Heart right ventricle (tissue), 16 donors: ENCODE measurements at regions of chr13 and their contacts with region 1.

Region 1: GRCh38 chr13:41678249-41678648 is 220.9 kb downstream of the RGCC start:
- DNase-seq: no peak
- ATAC-seq: peak in 5 of 8 donors; percentile 51 to 74 (median 58)
- H3K4me3 ChIP-seq: no peak overlapping the region
- H3K27ac ChIP-seq: peak overlapping the region in 5 of 10 donors; percentile 10 to 59 (median 27)
- H3K4me1 ChIP-seq: peaks cover 0 to 26% (median 7%) of the 10 kb centered on the region in 9 donors
- H3K27me3 ChIP-seq: no peaks in the 10 kb centered on the region
- CTCF ChIP-seq: no peak

Region 2: GRCh38 chr13:41546372-41547190 is 131.7 kb before region 1 on chr13:
- intact Hi-C with region 1: no loop called
- DNase-seq: no peak
- ATAC-seq: peak in 1 of 8 donors; percentile 0
- H3K4me3 ChIP-seq: no peak overlapping the region
- H3K27ac ChIP-seq: peak overlapping the region in 9 of 10 donors; percentile 68 to 85 (median 76)
- H3K4me1 ChIP-seq: peaks cover 0 to 32% (median 18%) of the 10 kb centered on the region in 9 donors
- H3K27me3 ChIP-seq: no peaks in the 10 kb centered on the region
- CTCF ChIP-seq: no peak

Region 3: DNA sequence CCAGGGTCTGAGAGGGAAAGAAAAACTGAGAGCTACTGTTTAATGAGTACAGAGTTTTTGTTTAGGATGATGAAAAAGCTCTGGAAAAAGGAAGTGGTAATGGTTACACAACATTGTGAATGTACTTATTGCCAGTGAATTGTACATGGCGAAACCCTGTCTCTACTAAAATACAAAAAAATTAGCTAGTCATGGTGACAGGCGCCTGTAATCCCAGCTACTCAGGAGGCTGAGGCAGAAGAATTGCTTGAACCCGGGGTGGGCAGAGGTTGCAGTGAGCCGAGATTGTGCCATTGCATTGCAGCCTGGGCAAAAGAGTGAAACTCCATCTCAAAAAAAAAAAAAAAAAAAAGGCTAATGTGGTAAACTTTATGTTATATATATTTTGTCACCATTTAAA is 186.4 kb after region 1 on chr13:
- intact Hi-C with region 1: loop called in 1 of 10 experiments (anchors 10 kb)
- DNase-seq: no peak
- ATAC-seq: peak in 1 of 8 donors; percentile 22
- H3K4me3 ChIP-seq: no peak overlapping the region
- H3K27ac ChIP-seq: peak overlapping the region in 1 of 10 donors; percentile 62
- H3K4me1 ChIP-seq: peaks cover 0 to 16% (median 0%) of the 10 kb centered on the region in 9 donors
- H3K27me3 ChIP-seq: no peaks in the 10 kb centered on the region
- CTCF ChIP-seq: no peak

Region 4: GRCh38 chr13:41962994-41963393 is 284.7 kb after region 1 on chr13:
- intact Hi-C with region 1: no loop called
- DNase-seq: no peak
- ATAC-seq: no peak
- H3K4me3 ChIP-seq: no peak overlapping the region
- H3K27ac ChIP-seq: no peak overlapping the region
- H3K4me1 ChIP-seq: peaks cover 6 to 31% (median 23%) of the 10 kb centered on the region in 9 donors
- H3K27me3 ChIP-seq: no peaks in the 10 kb centered on the region
- CTCF ChIP-seq: no peak